ENCODE measurements at regions of chr10 and their contacts with region 1.

Region 1: GRCh38 chr10:102151774-102152544 is at the start of gene NOLC1:
- DNase-seq: peak; percentile 100
- ATAC-seq: peak; percentile 92
- H3K4me3 Mint-ChIP-seq: peak within 1 kb of the TSS; percentile 99
- H3K27ac Mint-ChIP-seq: peak within 1 kb of the TSS; percentile 99
- H3K4me1 Mint-ChIP-seq: peaks cover 49% of the 10 kb centered on the region
- H3K27me3 Mint-ChIP-seq: no peaks in the 10 kb centered on the region
- total RNA-seq, gene NOLC1: 206 to 283 TPM

Region 2: DNA sequence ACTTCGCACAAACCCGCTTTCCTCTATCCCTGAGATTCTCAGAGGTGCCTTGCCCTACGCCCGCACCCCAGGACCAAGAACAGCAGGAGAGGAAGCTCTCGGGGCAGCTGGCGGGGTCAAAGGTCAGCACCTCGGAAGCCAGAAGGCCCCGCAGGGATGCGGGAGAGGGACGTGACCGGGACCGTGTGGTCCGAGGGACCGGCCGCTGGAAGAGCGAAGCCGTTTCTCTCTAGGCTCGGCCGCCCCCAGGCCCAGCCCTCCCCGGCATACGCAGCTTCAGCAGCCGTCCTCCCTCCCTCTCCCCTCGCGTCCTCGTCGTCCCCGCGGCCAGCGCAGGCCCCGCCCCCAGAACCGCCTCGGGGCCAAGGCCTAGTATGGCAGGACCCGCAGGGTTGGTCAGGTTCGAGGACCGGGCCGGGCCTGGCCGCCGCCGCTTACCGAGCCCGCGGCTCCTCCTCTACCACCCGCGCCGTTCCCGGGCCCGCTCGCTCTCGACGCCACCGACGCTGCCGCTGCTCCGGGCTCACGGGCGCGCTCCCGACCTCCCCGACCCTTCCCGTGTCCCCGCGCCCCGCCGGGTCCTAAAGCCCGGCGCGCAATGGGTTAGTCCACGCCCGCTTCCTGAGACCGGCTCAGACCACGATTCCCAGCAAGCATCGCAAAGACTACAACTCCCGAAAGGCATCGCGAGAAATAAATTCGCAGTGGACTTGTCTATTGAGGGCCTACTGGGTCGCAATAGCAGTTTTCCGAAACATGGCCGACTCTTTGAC is 96.1 kb before region 1 on chr10 and contains the start of gene ARMH3:
- CTCF ChIA-PET with region 1: no interaction called
- POLR2A ChIA-PET with region 1: no interaction called
- intact Hi-C with region 1: loop called in 1 of 2 experiments (anchors 1 kb)
- DNase-seq: peak; percentile 96
- ATAC-seq: peak; percentile 98
- H3K4me3 Mint-ChIP-seq: peak within 1 kb of the TSS; percentile 95
- H3K27ac Mint-ChIP-seq: peak within 1 kb of the TSS; percentile 93
- H3K4me1 Mint-ChIP-seq: peaks cover 40% of the 10 kb centered on the region
- H3K27me3 Mint-ChIP-seq: no peaks in the 10 kb centered on the region
- total RNA-seq, gene ARMH3: 16.0 to 21.0 TPM

Region 3: DNA sequence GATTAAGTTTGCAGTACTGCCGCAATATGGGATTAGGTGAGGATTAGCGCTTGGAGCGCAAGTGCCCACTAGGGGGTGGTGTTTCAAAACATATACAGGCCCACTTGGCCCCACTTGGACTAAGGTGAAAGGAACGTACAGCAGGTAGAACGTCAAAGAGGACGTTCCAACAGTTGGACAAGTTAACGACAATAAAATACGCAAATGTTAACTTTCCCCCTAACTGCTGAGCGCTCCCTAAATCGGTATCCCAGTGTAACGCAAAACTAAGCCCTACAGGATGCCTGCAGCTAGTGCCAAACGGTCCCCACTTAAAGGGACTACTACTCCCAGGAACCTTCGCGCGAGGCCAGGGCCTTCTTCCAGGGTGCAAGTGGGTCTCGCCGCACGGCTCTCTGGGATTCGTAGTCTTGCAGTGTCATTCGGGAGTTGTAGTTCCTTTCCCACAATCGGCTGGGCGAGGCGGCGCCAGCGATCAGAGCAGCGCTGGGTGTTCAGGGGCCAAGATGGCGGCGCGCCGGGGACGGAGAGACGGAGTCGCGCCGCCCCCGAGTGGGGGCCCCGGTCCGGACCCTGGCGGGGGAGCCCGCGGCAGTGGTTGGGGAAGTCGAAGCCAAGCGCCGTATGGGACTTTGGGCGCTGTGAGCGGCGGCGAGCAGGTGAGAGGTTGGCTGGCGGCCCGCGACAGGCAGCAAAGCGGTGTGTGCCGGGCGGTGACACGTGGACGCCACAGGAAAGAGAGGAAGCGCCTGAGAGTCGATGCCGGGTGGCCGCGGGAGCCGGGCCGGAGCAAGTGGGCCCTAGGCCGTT is 19.2 kb before region 1 on chr10 and contains the start of gene PPRC1:
- CTCF ChIA-PET with region 1: interaction called, 18 read pairs
- POLR2A ChIA-PET with region 1: interaction called, 11 read pairs
- intact Hi-C with region 1: loop called (anchors 1 kb)
- DNase-seq: peak; percentile 99
- ATAC-seq: peak; percentile 96
- H3K4me3 Mint-ChIP-seq: peak within 1 kb of the TSS; percentile 94
- H3K27ac Mint-ChIP-seq: peak within 1 kb of the TSS; percentile 94
- H3K4me1 Mint-ChIP-seq: peaks cover 38% of the 10 kb centered on the region
- H3K27me3 Mint-ChIP-seq: no peaks in the 10 kb centered on the region
- total RNA-seq, gene PPRC1: 61.3 to 74.7 TPM

Region 4: DNA sequence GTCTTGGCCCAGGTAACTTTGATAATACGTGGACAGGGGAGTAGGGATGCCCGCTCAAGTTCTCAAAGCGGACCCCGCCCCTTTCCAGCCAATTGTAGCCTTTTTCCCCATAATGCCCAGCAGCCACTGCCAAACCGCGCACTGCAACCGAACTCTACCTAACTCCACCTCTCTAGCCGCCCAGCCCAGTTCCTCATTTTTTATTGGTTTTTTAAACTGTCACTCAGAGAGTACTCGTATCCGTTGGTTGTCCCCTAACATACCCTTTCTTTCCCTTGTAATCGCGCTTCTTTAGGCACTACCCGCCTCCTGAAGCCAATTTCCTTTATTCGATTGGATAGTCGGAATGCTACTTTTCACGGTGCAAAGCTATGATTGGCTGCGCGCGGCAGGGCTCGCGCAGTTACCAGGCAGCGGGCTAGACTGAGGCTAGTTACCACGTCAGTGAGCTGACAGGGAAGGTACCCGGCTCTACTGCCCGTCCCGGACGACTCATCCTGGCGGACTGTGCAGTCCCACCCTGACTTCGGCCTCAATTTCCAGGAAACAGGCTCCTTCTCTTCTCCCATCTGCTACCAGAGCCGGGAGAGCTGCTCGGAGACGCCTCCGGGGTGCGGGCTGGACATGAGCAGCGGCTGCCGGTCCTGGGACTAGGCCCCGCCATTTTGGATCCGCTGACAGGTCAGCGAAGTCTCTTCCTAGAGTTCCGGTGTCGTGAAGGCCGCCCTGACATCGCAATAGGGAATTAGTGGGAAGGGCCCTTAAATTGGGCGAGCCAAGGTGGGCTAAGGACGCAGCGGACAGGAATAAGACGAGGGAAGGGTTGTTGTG is 93.4 kb after region 1 on chr10 and contains the start of gene GBF1:
- CTCF ChIA-PET with region 1: no interaction called
- POLR2A ChIA-PET with region 1: no interaction called
- intact Hi-C with region 1: loop called in 1 of 2 experiments (anchors 1 kb)
- DNase-seq: peak; percentile 94
- ATAC-seq: peak; percentile 90
- H3K4me3 Mint-ChIP-seq: peak within 1 kb of the TSS; percentile 98
- H3K27ac Mint-ChIP-seq: peak within 1 kb of the TSS; percentile 81
- H3K4me1 Mint-ChIP-seq: peaks cover 44% of the 10 kb centered on the region
- H3K27me3 Mint-ChIP-seq: peaks cover 18% of the 10 kb centered on the region
- total RNA-seq, gene GBF1: 33.1 to 37.5 TPM

Region 5: DNA sequence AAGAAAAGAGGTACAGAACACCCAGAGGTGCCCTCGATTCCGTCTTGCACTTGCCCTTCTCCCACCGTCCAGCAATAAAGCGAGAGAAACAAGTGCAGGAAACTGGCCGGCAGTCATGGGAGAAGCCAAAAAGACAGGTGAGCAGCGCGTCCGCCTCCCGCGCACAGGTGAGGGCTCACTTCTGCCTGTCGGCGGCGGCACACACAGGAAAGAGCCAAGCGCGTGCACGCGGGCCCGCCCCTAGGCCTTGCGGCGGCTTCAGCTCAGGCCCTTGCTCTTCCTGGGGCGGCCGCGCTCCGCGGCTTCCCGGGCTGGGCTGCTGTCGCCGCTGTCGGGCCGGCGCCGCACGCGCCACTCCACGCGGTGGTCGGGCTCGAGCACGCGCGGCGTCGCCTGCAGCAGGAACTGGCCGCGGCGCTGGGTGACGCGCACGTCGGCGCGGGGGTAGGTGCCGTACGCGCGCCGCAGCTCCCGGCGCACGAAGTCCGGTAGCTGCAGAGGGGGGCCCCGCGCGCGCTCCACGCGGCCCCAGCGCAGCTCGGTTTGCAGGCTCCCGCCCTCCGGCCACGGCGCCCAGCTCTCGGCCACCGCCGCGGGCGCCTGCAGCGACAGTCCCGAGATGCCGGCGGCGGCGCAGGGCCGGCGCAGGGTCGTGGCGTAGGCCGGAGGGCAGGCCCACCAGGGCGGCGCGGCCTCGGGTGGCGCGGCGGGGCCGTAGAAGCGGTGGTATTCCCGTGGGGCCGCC is 298.4 kb after region 1 on chr10:
- CTCF ChIA-PET with region 1: no interaction called
- POLR2A ChIA-PET with region 1: no interaction called
- intact Hi-C with region 1: loop called in 1 of 2 experiments (anchors 1 kb)
- DNase-seq: peak; percentile 91
- ATAC-seq: peak; percentile 66
- H3K4me3 Mint-ChIP-seq: peak overlapping the region; percentile 95
- H3K27ac Mint-ChIP-seq: peak overlapping the region; percentile 93
- H3K4me1 Mint-ChIP-seq: peaks cover 25% of the 10 kb centered on the region
- H3K27me3 Mint-ChIP-seq: no peaks in the 10 kb centered on the region

Region 6: GRCh38 chr10:103396064-103396788 is 1244.3 kb after region 1 on chr10 and contains the starts of genes ATP5MK and PDCD11:
- CTCF ChIA-PET with region 1: no interaction called
- POLR2A ChIA-PET with region 1: no interaction called
- intact Hi-C with region 1: loop called in 1 of 2 experiments (anchors 5 kb)
- DNase-seq: peak; percentile 98
- ATAC-seq: peak; percentile 100
- H3K4me3 Mint-ChIP-seq: peak within 1 kb of the TSS; percentile 99
- H3K27ac Mint-ChIP-seq: peak within 1 kb of the TSS; percentile 95
- H3K4me1 Mint-ChIP-seq: peaks cover 57% of the 10 kb centered on the region
- H3K27me3 Mint-ChIP-seq: no peaks in the 10 kb centered on the region
- total RNA-seq, gene ATP5MK: 377 to 447 TPM
- total RNA-seq, gene PDCD11: 60.6 to 73.8 TPM

Measured in activated CD4-positive, alpha-beta T cell treated with anti-CD3 and anti-CD28 coated beads for 36 hours (primary cell).